Activated B cell treated with CpG ODN at 0.5 μM for 24 hours (primary cell): ENCODE measurements at regions of chr5 and their contacts with region 1.

Region 1: DNA sequence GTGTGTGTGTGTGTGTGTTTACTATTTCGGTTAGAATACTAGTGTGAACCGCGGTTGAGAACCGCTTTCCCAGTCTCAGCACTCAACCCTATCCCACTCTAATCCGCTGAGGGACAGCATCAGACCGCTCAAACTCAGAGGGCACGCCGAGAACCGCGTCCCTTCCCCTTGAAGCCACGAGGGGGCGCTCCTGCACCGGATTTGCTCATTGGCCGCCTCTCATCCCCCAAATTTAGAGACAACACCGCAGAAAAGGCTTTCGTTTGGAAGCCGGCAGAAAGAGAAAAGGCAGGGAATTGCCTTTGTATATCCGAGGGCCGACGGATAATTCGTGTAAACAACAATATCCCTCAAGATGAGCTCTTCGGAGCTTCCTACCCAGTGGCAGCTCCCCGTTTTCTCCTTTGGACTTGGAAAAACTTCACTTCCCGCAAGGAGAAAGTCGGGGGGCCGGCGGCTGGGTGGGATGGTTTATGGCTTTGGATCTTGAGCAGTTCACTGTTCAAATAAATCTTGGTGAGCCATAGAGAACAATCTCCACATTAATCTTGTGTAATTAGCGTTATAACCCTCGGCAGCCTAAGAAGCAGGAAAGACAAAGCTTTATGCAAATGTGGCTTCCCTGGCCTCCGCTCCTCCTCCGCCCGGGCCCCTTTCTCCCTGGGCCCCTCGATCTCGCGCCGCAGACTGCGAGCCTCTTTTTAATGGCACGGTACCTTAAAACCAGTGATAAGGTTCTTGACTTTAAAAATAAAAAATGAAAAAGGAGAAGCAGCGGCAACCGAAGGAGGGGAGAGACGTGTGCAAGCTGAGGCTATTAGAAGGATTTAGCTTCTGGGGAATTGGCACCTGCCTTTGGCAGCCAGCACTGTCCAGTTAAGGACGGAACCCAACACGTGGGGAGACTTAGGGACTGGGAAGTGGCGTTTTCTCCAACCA is 296.8 kb downstream of the PARP8 start:
- DNase-seq: peak; percentile 45
- ATAC-seq: peak; percentile 68
- H3K4me3 Mint-ChIP-seq: peak overlapping the region; percentile 83
- H3K27ac Mint-ChIP-seq: no peak overlapping the region
- H3K4me1 Mint-ChIP-seq: peaks cover 44% of the 10 kb centered on the region
- H3K27me3 Mint-ChIP-seq: peaks cover 49% of the 10 kb centered on the region
- CTCF ChIP-seq: no peak

Region 2: DNA sequence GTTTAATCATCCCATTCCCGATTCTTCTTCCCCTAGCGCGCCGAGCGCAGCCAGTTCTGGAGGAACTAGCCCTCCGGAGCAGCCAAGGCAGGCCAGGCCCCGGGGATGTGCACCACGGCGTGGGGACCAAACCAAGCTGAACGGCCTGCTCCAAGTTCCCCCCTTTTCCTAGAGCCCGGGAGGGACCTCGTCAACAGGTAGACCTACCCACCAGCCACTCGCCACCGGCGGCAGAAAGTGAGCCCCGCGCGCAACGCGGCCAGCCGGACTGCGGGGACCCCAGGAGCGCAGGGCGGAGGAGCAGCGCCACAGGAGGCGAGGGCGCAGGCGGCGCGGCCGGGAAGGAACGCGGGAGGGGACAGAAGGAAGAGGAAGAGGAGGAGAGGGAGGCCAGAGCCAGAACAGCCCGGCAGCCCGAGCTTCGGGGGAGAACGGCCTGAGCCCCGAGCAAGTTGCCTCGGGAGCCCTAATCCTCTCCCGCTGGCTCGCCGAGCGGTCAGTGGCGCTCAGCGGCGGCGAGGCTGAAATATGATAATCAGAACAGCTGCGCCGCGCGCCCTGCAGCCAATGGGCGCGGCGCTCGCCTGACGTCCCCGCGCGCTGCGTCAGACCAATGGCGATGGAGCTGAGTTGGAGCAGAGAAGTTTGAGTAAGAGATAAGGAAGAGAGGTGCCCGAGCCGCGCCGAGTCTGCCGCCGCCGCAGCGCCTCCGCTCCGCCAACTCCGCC is 419.7 kb after region 1 on chr5 and contains the start of gene ISL1:
- CTCF ChIA-PET with region 1: no interaction called
- POLR2A ChIA-PET with region 1: no interaction called
- intact Hi-C with region 1: loop called (anchors 10 kb)
- DNase-seq: no peak
- ATAC-seq: no peak
- H3K4me3 Mint-ChIP-seq: no peak within 1 kb of the TSS
- H3K27ac Mint-ChIP-seq: no peak within 1 kb of the TSS
- H3K4me1 Mint-ChIP-seq: no peaks in the 10 kb centered on the region
- H3K27me3 Mint-ChIP-seq: peaks cover 82% of the 10 kb centered on the region
- CTCF ChIP-seq: no peak
- total RNA-seq, gene ISL1: not detected in 2 replicates

Region 3: DNA sequence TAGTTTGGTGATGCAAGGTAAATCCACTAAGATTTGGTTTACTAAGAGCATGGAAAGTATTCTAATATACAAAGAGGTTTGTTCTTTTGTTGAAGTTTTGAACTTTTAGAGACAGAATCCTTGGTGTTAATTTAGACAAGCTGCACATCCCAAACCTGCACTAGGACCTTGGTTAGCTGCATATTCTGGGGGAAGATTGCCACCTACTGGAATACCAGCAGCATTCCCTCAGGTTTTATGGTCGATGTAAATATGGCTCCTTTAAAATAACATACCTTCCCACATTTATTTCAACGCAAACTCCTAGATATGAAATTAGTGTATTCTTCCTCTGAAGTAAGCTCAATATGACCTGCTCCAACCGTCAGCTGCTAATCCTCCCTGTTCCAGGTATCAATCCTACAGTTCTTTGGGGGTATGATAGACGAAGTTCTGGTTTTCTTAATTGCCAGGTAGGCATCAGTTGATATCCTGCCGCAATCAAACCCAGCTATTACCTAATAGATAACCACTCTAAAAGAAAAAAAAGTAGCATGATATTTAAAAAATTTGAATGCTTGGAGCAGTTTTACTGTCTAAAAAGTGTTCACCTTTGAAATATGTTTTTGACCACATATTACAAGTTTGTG is 1044.1 kb after region 1 on chr5:
- CTCF ChIA-PET with region 1: no interaction called
- POLR2A ChIA-PET with region 1: no interaction called
- intact Hi-C with region 1: loop called (anchors 2 kb)
- DNase-seq: no peak
- ATAC-seq: no peak
- H3K4me3 Mint-ChIP-seq: no peak overlapping the region
- H3K27ac Mint-ChIP-seq: no peak overlapping the region
- H3K4me1 Mint-ChIP-seq: no peaks in the 10 kb centered on the region
- H3K27me3 Mint-ChIP-seq: no peaks in the 10 kb centered on the region
- CTCF ChIP-seq: no peak

Region 4: GRCh38 chr5:52657247-52657645 is 1694.0 kb after region 1 on chr5:
- CTCF ChIA-PET with region 1: interaction called, 12 read pairs
- POLR2A ChIA-PET with region 1: no interaction called
- intact Hi-C with region 1: loop called (anchors 1 kb)
- DNase-seq: no peak
- ATAC-seq: no peak
- H3K4me3 Mint-ChIP-seq: no peak overlapping the region
- H3K27ac Mint-ChIP-seq: no peak overlapping the region
- H3K4me1 Mint-ChIP-seq: no peaks in the 10 kb centered on the region
- H3K27me3 Mint-ChIP-seq: peaks cover 4% of the 10 kb centered on the region
- CTCF ChIP-seq: no peak

Region 5: DNA sequence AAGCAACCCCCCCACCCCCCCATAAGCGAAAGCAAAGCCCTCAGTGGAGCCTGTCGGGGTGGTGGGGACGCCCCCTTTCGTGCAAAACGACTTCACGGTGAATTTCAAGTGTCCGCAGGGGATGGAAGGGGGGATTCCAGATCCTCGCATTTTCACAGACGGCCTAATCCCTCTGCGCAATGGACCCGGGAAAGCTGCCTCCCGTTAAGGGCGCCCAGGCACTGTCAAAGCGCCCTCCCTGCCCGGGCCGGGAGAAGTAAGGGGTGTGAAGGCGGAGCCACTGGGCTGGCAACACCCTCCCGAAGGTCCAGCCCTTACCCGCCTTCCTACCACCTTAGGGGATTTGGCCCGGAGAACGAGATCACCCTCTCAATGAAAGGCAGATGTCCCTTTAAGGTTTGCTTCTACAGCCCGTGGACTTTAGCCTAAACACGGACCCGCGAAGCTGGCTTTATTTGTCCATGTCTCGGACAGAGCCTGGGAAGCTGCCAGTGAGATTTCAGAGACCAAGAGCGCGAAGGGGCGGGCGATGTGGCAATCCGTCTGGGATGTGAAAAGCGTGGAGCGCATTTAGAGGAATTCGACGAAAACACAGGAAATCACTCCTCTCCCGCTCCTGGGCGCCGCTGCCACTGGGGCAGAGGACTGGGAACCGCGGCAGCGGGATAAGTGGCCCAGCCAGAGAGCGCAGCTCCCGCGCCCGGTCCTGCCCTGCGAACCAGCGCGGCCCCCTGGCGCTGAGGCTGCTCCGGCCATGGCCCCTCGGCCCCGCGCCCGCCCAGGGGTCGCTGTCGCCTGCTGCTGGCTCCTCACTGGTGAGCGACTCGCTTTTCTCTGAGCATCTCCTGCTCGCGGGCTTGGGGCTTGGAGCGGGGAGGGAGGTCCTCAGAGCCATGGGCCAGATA is 1824.6 kb after region 1 on chr5 and contains the starts of genes ITGA1 and PELO:
- CTCF ChIA-PET with region 1: no interaction called
- POLR2A ChIA-PET with region 1: no interaction called
- intact Hi-C with region 1: loop called (anchors 10 kb)
- DNase-seq: peak; percentile 51
- ATAC-seq: peak; percentile 80
- H3K4me3 Mint-ChIP-seq: peak within 1 kb of the TSS; percentile 91
- H3K27ac Mint-ChIP-seq: peak within 1 kb of the TSS; percentile 78
- H3K4me1 Mint-ChIP-seq: peaks cover 15% of the 10 kb centered on the region
- H3K27me3 Mint-ChIP-seq: peaks cover 22% of the 10 kb centered on the region
- CTCF ChIP-seq: no peak
- total RNA-seq, gene ITGA1: 28.4 and 34.0 TPM in 2 replicates
- total RNA-seq, gene PELO: 20.0 and 23.0 TPM in 2 replicates